CD8-positive, alpha-beta T cell (primary cell): ENCODE measurements at regions of chr19 and their contacts with region 1.

Region 1: DNA sequence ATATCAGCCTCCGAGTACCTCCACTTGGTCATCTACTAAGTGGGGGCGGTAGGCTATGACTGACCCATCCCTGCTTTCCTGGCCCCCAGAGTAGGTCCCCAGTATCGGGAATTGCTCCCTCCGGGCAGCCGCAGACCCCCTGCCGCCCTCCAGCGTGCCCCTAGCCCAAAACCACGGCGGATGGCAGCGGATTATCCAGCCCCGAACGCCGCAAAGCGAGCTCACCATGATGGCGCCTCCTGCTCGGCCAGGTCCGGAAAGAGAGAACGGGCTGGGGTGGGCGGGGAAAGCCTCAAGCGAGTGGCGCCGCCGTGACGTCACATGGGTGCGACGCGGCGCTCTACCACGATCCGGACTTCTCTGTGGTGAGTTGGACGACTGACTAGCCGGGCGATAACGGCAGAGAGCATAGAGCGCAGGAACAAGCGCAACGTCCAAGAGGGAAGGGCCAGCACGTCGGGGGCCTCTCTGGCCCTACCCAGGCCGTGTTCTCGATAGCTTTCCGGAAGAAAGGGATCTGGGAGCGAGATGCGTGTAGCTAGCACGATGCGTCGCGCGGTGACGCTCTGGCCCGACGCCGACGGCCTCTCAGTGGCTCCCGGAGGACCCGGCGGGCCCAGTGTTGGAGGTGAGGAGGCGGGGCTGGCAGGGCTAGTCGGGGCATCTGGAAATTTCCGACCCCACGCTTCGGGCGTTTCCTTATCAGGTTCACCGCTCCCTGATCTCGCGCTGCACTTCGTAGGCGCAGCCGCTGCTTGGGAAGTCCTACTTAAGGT is at the starts of genes RPL18 and SPHK2:
- DNase-seq: peak; percentile 88 to 99 (median 94)
- ATAC-seq: peak; percentile 70
- H3K4me3 ChIP-seq: peak within 1 kb of the TSS; percentile 99
- H3K4me3 Mint-ChIP-seq: peak within 1 kb of the TSS; percentile 97
- H3K27ac ChIP-seq: peak within 1 kb of the TSS; percentile 92 to 94
- H3K27ac Mint-ChIP-seq: peak within 1 kb of the TSS; percentile 99
- H3K4me1 ChIP-seq: peaks cover 37% of the 10 kb centered on the region
- H3K4me1 Mint-ChIP-seq: peaks cover 57% of the 10 kb centered on the region
- H3K27me3 ChIP-seq: no peaks in the 10 kb centered on the region
- H3K27me3 Mint-ChIP-seq: no peaks in the 10 kb centered on the region
- CTCF ChIP-seq: no peak
- total RNA-seq, gene RPL18: 2,604 to 2,657 TPM
- total RNA-seq, gene SPHK2: 15.6 to 17.6 TPM

Region 2: DNA sequence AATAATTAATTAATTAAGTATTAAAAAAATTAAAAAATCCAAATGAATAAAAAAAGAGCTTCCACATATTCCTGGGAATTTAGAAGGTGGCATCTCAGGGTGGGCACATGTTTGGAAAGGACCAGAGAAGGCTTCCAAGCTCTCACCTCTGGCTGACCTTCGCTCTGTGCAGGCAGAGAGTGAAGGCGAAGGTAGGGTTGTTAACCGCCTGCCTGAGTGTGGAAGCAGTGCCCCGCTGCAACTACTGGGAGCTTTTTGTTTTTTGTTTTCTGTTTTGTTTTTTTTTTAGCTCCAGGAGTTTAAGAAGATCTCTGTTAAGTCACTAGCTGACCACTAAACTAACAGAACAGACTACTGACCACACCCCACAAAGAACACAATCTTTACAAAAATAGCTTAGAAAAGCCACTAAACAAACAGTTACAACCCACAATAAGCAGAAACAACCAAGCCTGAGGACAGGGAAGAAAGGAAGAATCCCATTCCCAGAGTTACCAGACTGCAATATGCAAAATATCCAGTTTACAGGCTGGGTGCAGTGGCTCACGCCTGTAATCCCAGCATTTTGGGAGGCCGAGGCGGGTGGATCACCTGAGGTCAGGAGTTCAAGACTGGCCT is 1057.6 kb before region 1 on chr19:
- CTCF ChIA-PET with region 1: no interaction called
- POLR2A ChIA-PET with region 1: no interaction called
- intact Hi-C with region 1: no loop called
- DNase-seq: no peak
- ATAC-seq: no peak
- H3K4me3 ChIP-seq: no peak overlapping the region
- H3K4me3 Mint-ChIP-seq: no peak overlapping the region
- H3K27ac ChIP-seq: no peak overlapping the region
- H3K27ac Mint-ChIP-seq: no peak overlapping the region
- H3K4me1 ChIP-seq: no peaks in the 10 kb centered on the region
- H3K4me1 Mint-ChIP-seq: no peaks in the 10 kb centered on the region
- H3K27me3 ChIP-seq: no peaks in the 10 kb centered on the region
- H3K27me3 Mint-ChIP-seq: no peaks in the 10 kb centered on the region
- CTCF ChIP-seq: no peak

Region 3: DNA sequence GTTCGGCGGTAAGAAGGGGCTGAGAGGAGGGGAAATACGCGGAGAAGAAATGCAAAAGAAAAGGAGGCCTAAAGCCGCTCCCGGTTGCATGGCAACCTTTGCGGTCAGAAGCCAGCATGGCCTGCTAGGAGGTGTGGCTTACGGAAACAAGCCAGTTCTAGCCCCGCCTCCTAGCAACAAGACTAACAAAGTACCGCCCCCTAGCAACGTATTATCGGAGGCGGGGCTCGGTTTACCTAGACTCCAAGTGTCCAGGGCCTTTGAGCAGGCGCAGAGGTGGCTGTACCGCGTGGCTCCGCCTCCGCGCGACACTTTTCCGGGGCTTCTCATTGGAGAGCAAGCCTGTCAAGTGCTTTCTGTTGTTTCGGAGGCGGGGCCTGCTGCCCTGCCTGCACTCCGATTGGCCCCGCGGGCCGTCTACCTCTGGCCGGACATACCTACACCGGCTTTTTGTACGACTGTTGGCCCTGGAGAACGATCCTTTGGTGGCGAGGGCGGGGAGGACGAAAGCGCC is 150.3 kb before region 1 on chr19:
- CTCF ChIA-PET with region 1: no interaction called
- POLR2A ChIA-PET with region 1: interaction called, 3 read pairs
- intact Hi-C with region 1: loop called in 1 of 2 experiments (anchors 1 kb)
- DNase-seq: peak; percentile 98 to 100 (median 99)
- ATAC-seq: peak; percentile 85
- H3K4me3 ChIP-seq: peak overlapping the region; percentile 83 to 95
- H3K4me3 Mint-ChIP-seq: peak overlapping the region; percentile 90
- H3K27ac ChIP-seq: peak overlapping the region; percentile 75 to 90
- H3K27ac Mint-ChIP-seq: peak overlapping the region; percentile 85
- H3K4me1 ChIP-seq: peaks cover 15% of the 10 kb centered on the region
- H3K4me1 Mint-ChIP-seq: peaks cover 21% of the 10 kb centered on the region
- H3K27me3 ChIP-seq: no peaks in the 10 kb centered on the region
- H3K27me3 Mint-ChIP-seq: no peaks in the 10 kb centered on the region
- CTCF ChIP-seq: no peak

Region 4: DNA sequence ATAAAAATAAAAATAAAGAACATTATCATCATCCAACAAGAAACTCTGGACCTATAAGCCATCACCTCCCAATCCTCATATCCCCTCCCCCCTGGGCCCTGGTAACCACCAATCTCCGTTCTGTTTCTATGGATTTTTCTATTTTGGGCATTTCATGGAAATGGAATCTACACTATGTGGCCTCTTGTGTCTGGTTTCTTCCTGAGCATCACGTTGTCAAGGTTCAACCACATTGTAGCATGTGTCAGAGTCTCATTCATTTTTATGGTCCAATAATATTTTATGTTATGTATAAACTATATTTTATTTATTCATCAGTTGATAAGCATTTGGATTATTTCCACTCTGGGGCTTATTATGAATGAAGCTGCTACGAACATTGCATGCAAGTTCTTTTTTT is 40.2 kb before region 1 on chr19:
- CTCF ChIA-PET with region 1: no interaction called
- POLR2A ChIA-PET with region 1: no interaction called
- intact Hi-C with region 1: loop called in 1 of 2 experiments (anchors 2 kb)
- DNase-seq: no peak
- ATAC-seq: no peak
- H3K4me3 ChIP-seq: no peak overlapping the region
- H3K4me3 Mint-ChIP-seq: no peak overlapping the region
- H3K27ac ChIP-seq: no peak overlapping the region
- H3K27ac Mint-ChIP-seq: no peak overlapping the region
- H3K4me1 ChIP-seq: no peaks in the 10 kb centered on the region
- H3K4me1 Mint-ChIP-seq: peaks cover under 1% of the 10 kb centered on the region
- H3K27me3 ChIP-seq: no peaks in the 10 kb centered on the region
- H3K27me3 Mint-ChIP-seq: peaks cover 2% of the 10 kb centered on the region
- CTCF ChIP-seq: no peak

Region 5: DNA sequence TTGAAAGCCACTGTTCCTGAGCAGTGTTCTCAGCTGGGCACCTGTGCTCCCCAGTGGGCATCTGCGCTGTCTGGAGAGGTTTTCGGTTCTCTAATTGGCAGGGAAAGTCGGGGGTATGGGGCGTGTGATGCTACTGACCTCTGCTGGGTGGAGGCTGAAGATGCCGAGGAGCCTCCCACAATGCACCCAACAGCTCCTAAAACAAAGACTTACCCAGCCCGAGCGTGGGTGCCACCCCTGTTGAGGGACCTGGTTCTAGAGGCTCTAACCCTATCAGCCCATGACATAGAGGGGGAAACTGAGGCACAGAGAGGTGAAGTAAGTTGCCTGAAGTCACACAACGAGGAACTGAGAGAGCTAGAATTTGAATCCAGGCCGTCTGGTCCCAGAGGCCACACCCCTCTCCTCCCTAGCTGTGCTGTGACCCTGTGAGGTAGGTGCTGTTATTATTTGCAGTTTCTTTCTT is 10.3 kb before region 1 on chr19:
- CTCF ChIA-PET with region 1: interaction called, 13 read pairs
- POLR2A ChIA-PET with region 1: interaction called, 10 read pairs
- intact Hi-C with region 1: no loop called
- DNase-seq: peak in 8 of 9 experiments; percentile 28 to 76 (median 54)
- ATAC-seq: peak; percentile 91
- H3K4me3 ChIP-seq: no peak overlapping the region
- H3K4me3 Mint-ChIP-seq: no peak overlapping the region
- H3K27ac ChIP-seq: no peak overlapping the region
- H3K27ac Mint-ChIP-seq: no peak overlapping the region
- H3K4me1 ChIP-seq: peaks cover 6% of the 10 kb centered on the region
- H3K4me1 Mint-ChIP-seq: peaks cover 4% of the 10 kb centered on the region
- H3K27me3 ChIP-seq: no peaks in the 10 kb centered on the region
- H3K27me3 Mint-ChIP-seq: no peaks in the 10 kb centered on the region
- CTCF ChIP-seq: peak; percentile 50

Region 6: DNA sequence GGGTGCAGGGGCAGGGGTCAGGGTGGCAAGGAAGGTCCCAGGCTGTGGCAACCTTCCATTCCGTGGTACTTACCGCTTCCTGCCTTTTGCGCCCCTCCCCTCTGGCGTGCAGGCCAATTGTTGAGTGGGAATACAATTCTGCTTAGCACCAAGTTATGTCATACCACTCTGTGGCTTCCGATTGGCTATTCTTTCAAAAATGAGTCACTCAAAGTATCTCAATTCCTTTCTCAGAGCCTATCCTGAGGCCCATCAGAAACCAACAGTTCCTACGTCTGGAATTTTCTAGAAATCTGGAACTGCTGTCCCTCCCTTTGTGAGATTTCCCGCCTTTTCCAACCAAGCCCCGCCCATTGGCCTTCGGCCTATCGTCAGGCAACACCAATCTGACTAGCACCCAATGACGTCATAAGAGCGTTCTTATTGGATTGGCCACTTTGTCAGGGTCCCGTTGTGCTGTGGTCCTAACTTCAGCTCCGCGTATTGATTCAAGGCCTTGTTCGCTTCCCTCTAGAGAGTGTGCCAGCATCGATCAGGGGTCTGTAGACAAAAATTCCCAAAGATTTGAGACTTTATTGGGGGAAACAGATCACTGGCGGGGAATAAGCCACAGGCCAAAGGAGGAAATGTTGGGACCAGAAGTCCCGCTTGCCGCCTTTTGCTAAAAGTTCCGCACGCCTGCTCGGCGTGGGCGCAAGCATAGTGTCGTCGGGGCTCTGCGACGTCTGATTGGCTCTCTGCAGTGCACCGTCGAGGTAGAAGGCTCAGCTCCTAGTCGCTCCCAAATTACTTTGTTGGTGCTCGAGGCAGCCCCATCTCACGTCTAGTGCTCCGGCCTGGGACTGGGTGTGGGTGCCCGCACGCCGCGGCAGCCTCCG is 42.0 kb after region 1 on chr19:
- CTCF ChIA-PET with region 1: no interaction called
- POLR2A ChIA-PET with region 1: no interaction called
- intact Hi-C with region 1: loop called in 1 of 2 experiments (anchors 2 kb)
- DNase-seq: peak; percentile 53 to 92 (median 79)
- ATAC-seq: peak; percentile 90
- H3K4me3 ChIP-seq: peak overlapping the region; percentile 31 to 36
- H3K4me3 Mint-ChIP-seq: peak overlapping the region; percentile 70
- H3K27ac ChIP-seq: peak overlapping the region; percentile 56 to 68
- H3K27ac Mint-ChIP-seq: peak overlapping the region; percentile 90
- H3K4me1 ChIP-seq: peaks cover 11% of the 10 kb centered on the region
- H3K4me1 Mint-ChIP-seq: peaks cover 9% of the 10 kb centered on the region
- H3K27me3 ChIP-seq: no peaks in the 10 kb centered on the region
- H3K27me3 Mint-ChIP-seq: no peaks in the 10 kb centered on the region
- CTCF ChIP-seq: no peak

Region 7: DNA sequence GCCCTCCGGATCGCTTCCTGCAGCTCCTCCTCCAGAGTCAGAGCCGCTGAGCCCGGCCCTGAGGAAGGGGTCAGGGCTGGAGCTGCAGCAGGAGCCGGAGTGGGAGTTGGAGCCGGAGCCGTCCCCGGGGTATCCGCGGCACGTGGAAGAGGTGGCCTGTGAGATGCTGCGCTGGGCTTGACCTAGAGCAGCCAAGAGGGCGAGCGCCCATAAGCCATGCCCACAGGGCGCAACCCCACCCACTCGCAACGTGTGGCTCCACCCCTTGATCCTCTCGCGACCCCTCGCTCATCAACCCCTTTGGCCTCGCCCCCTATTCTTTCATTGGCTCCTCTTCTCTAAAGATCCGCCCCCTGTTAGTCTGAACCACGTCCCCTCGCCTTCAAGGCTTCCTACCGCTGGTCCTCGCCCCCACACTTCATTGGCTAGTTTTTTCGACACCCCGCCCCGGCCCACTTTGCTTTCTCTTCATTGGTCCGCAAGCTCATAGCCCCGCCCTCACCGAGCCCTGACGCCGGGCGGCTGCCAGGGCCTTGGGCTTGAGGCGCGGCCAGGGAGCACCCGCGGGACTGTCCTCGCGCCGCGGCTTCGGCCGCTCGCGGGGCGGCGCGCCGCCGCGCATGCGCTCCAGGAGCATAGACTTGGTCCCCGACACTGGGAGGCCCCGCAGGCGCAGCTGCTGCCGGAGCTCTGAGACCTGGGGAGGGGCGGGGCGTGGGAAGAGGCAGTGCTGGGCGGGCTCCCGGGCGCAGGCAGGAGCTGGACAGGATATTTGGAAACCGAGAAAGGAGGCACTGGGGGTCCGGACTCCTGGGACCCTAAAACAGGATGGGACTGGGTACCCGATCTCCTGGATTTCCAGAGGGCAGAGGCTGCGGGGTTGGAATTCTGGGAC is 95.0 kb after region 1 on chr19:
- CTCF ChIA-PET with region 1: no interaction called
- POLR2A ChIA-PET with region 1: interaction called, 3 read pairs
- intact Hi-C with region 1: loop called in 1 of 2 experiments (anchors 1 kb)
- DNase-seq: peak; percentile 94 to 99 (median 96)
- ATAC-seq: peak; percentile 95
- H3K4me3 ChIP-seq: peak overlapping the region; percentile 76 to 83
- H3K4me3 Mint-ChIP-seq: peak overlapping the region; percentile 85
- H3K27ac ChIP-seq: peak overlapping the region; percentile 45 to 70
- H3K27ac Mint-ChIP-seq: peak overlapping the region; percentile 73
- H3K4me1 ChIP-seq: peaks cover 20% of the 10 kb centered on the region
- H3K4me1 Mint-ChIP-seq: peaks cover 18% of the 10 kb centered on the region
- H3K27me3 ChIP-seq: no peaks in the 10 kb centered on the region
- H3K27me3 Mint-ChIP-seq: no peaks in the 10 kb centered on the region
- CTCF ChIP-seq: no peak

Region 8: GRCh38 chr19:48899781-48900476 is 280.8 kb after region 1 on chr19 and contains the start of gene NUCB1:
- CTCF ChIA-PET with region 1: no interaction called
- POLR2A ChIA-PET with region 1: no interaction called
- intact Hi-C with region 1: no loop called
- DNase-seq: peak; percentile 96 to 99 (median 98)
- ATAC-seq: peak; percentile 95
- H3K4me3 ChIP-seq: peak within 1 kb of the TSS; percentile 85 to 98
- H3K4me3 Mint-ChIP-seq: peak within 1 kb of the TSS; percentile 94
- H3K27ac ChIP-seq: peak within 1 kb of the TSS; percentile 77 to 78
- H3K27ac Mint-ChIP-seq: peak within 1 kb of the TSS; percentile 95
- H3K4me1 ChIP-seq: peaks cover 29% of the 10 kb centered on the region
- H3K4me1 Mint-ChIP-seq: peaks cover 30% of the 10 kb centered on the region
- H3K27me3 ChIP-seq: no peaks in the 10 kb centered on the region
- H3K27me3 Mint-ChIP-seq: peaks cover 2% of the 10 kb centered on the region
- CTCF ChIP-seq: no peak
- total RNA-seq, gene NUCB1: 55.4 to 66.7 TPM